Activated naive CD8-positive, alpha-beta T cell treated with anti-CD3 and anti-CD28 coated beads, Interleukin-2, amount 10 ng/mL, durations not matched to agents 7 days and 5 days (primary cell): ENCODE measurements at regions of chr1 and their contacts with region 1.

Region 1: GRCh38 chr1:21294266-21294989 is 4.2 kb upstream of the ECE1 start:
- DNase-seq: peak; percentile 73
- ATAC-seq: peak; percentile 75
- H3K4me3 Mint-ChIP-seq: peak overlapping the region; percentile 77
- H3K27ac Mint-ChIP-seq: peak overlapping the region; percentile 90
- H3K4me1 Mint-ChIP-seq: peaks cover 69% of the 10 kb centered on the region
- H3K27me3 Mint-ChIP-seq: no peaks in the 10 kb centered on the region

Region 2: DNA sequence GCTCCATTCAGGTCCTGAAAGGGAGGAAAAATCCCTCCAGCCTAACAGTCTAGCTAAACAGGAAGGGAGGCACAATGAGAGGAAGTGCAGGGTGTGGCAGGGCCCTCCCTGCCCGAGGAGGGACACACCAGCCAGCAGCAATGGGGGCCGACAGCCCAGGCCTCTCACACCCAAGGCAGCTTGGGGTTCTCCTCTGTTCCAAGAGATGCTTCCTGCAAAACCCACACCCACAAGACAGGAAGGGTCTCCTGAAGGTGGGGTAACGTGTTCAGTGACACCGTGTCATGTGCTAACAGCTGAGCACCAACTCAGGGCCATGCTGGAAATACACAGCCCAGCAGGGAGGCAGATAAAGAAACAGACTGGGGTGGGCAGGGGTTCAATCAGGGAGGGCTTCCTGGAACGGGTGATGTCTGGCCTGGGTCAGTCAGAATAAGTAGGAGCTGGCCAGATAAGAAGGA is 14.4 kb before region 1 on chr1:
- POLR2A ChIA-PET with region 1: interaction called, 17 read pairs
- DNase-seq: no peak
- ATAC-seq: peak; percentile 81
- H3K4me3 Mint-ChIP-seq: peak overlapping the region; percentile 78
- H3K27ac Mint-ChIP-seq: peak overlapping the region; percentile 93
- H3K4me1 Mint-ChIP-seq: peaks cover 40% of the 10 kb centered on the region
- H3K27me3 Mint-ChIP-seq: no peaks in the 10 kb centered on the region

Region 3: DNA sequence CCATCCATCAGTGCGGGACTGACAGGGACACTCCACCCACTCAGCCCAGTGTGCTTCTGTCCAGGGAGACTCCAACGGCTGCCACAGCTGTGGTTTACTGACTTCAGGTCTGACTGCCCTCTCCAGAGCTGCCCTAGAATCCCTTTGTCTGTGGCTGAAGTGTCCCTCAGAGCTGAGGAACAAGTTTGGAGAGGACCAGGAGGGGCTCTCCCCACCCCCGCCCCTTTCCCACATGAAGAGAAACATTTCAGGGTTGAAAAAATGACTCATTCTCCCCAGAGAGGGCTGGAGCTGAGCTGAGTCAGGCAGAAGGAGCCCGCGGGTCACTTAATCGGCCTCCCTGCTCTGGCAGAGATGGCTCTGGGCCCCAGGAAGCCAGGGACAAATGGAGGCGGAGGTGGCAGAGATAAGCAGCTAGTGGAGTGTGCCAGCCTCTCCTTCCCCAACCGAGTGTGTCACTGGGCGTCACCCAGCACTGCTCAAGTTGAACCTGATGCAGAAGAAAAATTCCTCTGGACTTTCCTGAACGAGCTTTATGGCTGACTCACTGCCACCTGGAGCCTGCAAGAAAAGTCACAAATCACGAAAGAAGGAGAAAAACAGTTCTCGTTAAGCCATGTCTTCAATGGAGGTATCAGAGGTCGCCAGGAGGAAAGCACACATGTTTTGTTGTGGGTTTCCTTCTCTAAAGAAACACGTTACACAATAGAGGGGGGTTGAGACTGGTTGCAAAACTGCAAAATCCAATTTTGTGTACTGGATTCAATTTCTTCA is 30.1 kb after region 1 on chr1:
- POLR2A ChIA-PET with region 1: interaction called, 14 read pairs
- DNase-seq: peak; percentile 45
- ATAC-seq: peak; percentile 68
- H3K4me3 Mint-ChIP-seq: peak overlapping the region; percentile 72
- H3K27ac Mint-ChIP-seq: peak overlapping the region; percentile 77
- H3K4me1 Mint-ChIP-seq: peaks cover 57% of the 10 kb centered on the region
- H3K27me3 Mint-ChIP-seq: no peaks in the 10 kb centered on the region

Region 4: DNA sequence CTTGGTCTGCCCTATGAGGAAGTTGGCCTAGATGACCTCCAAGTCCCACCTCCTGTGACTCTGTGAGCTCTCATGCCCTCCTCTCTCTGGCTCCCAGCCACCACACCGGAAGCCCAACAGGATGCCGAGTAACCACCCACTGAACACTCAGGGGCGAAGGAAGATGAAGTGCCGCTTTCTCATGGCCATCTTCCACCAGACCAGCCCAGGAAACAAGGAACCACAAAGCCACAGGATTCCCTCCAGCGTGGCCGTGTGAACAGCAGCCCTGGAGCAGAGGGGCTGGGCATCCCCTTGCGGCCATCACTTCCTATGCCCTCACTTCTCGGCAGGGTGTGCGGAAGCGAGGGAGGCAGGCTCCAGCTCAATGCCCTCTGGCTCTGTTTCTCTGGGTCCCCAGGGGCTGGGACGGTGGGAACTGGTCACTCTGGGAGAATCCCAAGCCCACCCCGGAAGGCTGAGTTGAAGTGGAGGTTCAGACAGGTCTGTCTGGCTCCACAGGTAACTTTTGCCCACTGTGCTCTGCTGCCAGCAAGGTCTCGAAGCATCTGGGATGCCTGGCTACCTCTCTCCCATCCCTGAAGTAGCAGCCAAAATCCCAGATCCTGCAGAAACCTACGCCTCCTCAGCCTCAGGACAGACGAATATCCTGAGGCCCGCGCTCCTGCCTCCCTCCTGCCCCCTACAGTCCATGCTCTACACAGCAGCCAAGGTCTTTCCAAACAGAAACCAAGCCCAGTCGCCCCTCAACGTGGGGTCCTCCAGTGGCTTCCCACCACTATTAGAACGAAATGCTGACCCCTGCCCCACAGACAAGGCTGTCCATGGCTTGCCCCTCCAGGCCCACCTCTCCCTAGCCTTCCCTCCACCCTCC is 40.0 kb after region 1 on chr1:
- POLR2A ChIA-PET with region 1: interaction called, 27 read pairs
- DNase-seq: peak; percentile 81
- ATAC-seq: peak; percentile 93
- H3K4me3 Mint-ChIP-seq: peak overlapping the region; percentile 82
- H3K27ac Mint-ChIP-seq: peak overlapping the region; percentile 91
- H3K4me1 Mint-ChIP-seq: peaks cover 73% of the 10 kb centered on the region
- H3K27me3 Mint-ChIP-seq: no peaks in the 10 kb centered on the region